ENCODE measurements at regions of chr2 and their contacts with region 1.

Region 1: GRCh38 chr2:112054847-112055729 is at the start of gene TMEM87B:
- DNase-seq: peak; percentile 57
- ATAC-seq: peak; percentile 79
- H3K4me3 ChIP-seq: peak within 1 kb of the TSS; percentile 82 to 92
- H3K27ac ChIP-seq: peak within 1 kb of the TSS; percentile 81
- H3K4me1 ChIP-seq: peaks cover 14% of the 10 kb centered on the region
- H3K27me3 ChIP-seq: no peaks in the 10 kb centered on the region
- CTCF ChIP-seq: no peak
- total RNA-seq, gene TMEM87B: 22.8 TPM

Region 2: GRCh38 chr2:111910609-111911277 is 144.3 kb before region 1 on chr2:
- CTCF ChIA-PET with region 1: no interaction called
- POLR2A ChIA-PET with region 1: interaction called, 21 read pairs
- in situ Hi-C with region 1: no loop called
- intact Hi-C with region 1: no loop called
- DNase-seq: no peak
- ATAC-seq: no peak
- H3K4me3 ChIP-seq: no peak overlapping the region
- H3K27ac ChIP-seq: no peak overlapping the region
- H3K4me1 ChIP-seq: peaks cover 11% of the 10 kb centered on the region; the same call in 1 of the 2 replicates
- H3K27me3 ChIP-seq: no peaks in the 10 kb centered on the region
- CTCF ChIP-seq: no peak

Region 3: GRCh38 chr2:111927723-111928122 is 127.4 kb before region 1 on chr2:
- CTCF ChIA-PET with region 1: no interaction called
- POLR2A ChIA-PET with region 1: interaction called, 16 read pairs
- in situ Hi-C with region 1: no loop called
- intact Hi-C with region 1: no loop called
- DNase-seq: no peak
- ATAC-seq: no peak
- H3K4me3 ChIP-seq: no peak overlapping the region
- H3K27ac ChIP-seq: no peak overlapping the region
- H3K4me1 ChIP-seq: no peaks in the 10 kb centered on the region
- H3K27me3 ChIP-seq: no peaks in the 10 kb centered on the region
- CTCF ChIP-seq: no peak

Measured in Panc1 (cell line).